ENCODE measurements at regions of chr3 and their contacts with region 1.

Region 1: DNA sequence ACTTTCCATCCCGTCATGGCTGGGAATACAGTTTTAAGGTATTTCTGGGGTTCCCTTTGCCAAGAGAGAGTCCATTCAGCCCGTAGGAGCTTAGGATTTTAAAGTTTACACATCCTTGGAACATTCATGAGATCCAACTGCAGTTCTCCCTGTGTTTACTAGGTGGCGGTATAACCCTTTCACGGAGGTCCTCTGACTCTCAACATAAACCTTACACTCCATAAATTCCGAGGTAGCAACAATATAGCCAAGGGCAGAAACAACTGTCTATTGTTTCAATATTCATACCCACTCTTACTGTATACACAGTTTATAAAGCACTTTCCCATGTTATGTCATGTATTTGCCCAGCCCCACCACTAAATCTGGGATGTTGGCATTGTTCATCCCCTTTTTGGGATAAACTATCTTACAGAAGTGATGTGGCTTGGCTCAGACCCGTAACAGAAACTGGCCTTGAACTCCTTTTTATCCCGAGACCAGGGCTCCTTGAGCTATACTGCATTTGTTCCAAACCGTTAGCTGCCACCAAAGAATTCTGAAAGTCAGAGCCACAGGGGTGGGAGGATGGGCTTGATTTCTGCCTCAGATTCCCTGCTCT is 69.2 kb upstream of the COL6A5 start:
- DNase-seq: peak; percentile 23
- ATAC-seq: peak; percentile 94
- H3K4me3 ChIP-seq: no peak overlapping the region
- H3K27ac ChIP-seq: no peak overlapping the region
- H3K4me1 ChIP-seq: no peaks in the 10 kb centered on the region
- H3K27me3 ChIP-seq: peaks cover 39% of the 10 kb centered on the region
- CTCF ChIP-seq: peak; percentile 56 to 95 (median 87); a peak in 5 of 6 replicates
- POLR2A ChIP-seq: no peak
- RAD21 ChIP-seq: peak; percentile 83

Region 2: GRCh38 chr3:129439817-129440617 is 836.3 kb before region 1 on chr3 and contains the starts of genes IFT122 and MBD4:
- CTCF ChIA-PET with region 1: no interaction called
- POLR2A ChIA-PET with region 1: no interaction called
- RAD21 ChIA-PET with region 1: no interaction called
- intact Hi-C with region 1: no loop called
- DNase-seq: peak; percentile 98
- ATAC-seq: peak; percentile 93
- H3K4me3 ChIP-seq: peak within 1 kb of the TSS; percentile 90 to 99
- H3K27ac ChIP-seq: peak within 1 kb of the TSS; percentile 85
- H3K4me1 ChIP-seq: peaks cover 9 to 18% of the 10 kb centered on the region in 2 experiments; a peak in 3 of 4 replicates
- H3K27me3 ChIP-seq: no peaks in the 10 kb centered on the region
- CTCF ChIP-seq: no peak
- POLR2A ChIP-seq: peak; percentile 62
- RAD21 ChIP-seq: no peak
- total RNA-seq, gene IFT122: 21.4 TPM
- total RNA-seq, gene MBD4: 15.7 TPM

Region 3: GRCh38 chr3:130236417-130236816 is 39.9 kb before region 1 on chr3:
- CTCF ChIA-PET with region 1: no interaction called
- POLR2A ChIA-PET with region 1: no interaction called
- RAD21 ChIA-PET with region 1: no interaction called
- intact Hi-C with region 1: no loop called
- DNase-seq: no peak
- ATAC-seq: no peak
- H3K4me3 ChIP-seq: no peak overlapping the region
- H3K27ac ChIP-seq: no peak overlapping the region
- H3K4me1 ChIP-seq: no peaks in the 10 kb centered on the region
- H3K27me3 ChIP-seq: peaks cover 42% of the 10 kb centered on the region
- CTCF ChIP-seq: no peak
- POLR2A ChIP-seq: no peak
- RAD21 ChIP-seq: no peak

Region 4: DNA sequence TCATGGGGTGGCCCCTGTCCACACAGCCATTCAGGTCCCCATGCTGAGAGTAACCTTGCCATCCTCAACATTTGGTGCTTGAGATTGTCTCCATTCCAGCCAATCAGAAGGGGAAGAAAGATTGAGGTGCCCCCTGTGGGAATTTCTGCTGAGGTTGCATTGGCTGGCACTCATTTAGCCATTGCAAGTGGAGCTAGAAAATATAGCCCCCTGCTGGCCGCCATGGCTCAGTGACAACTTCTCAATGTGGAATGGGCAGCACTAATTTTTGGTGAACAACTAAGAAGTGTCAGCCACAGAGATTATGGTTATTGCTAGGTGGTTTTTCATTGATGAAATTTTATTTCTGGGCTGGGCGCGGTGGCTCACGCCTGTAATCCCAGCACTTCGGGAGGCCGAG is 262.7 kb after region 1 on chr3:
- CTCF ChIA-PET with region 1: interaction called, 19 read pairs
- POLR2A ChIA-PET with region 1: no interaction called
- RAD21 ChIA-PET with region 1: no interaction called
- intact Hi-C with region 1: loop called (anchors 1 kb)
- DNase-seq: peak; percentile 40
- ATAC-seq: peak; percentile 94
- H3K4me3 ChIP-seq: no peak overlapping the region
- H3K27ac ChIP-seq: no peak overlapping the region
- H3K4me1 ChIP-seq: no peaks in the 10 kb centered on the region
- H3K27me3 ChIP-seq: peaks cover 32% of the 10 kb centered on the region
- CTCF ChIP-seq: peak; percentile 76 to 80 (median 78)
- POLR2A ChIP-seq: no peak
- RAD21 ChIP-seq: peak; percentile 71

Region 5: GRCh38 chr3:130688015-130688688 is 411.8 kb after region 1 on chr3:
- CTCF ChIA-PET with region 1: no interaction called
- POLR2A ChIA-PET with region 1: no interaction called
- RAD21 ChIA-PET with region 1: no interaction called
- intact Hi-C with region 1: loop called (anchors 10 kb)
- DNase-seq: no peak
- ATAC-seq: no peak
- H3K4me3 ChIP-seq: no peak overlapping the region
- H3K27ac ChIP-seq: no peak overlapping the region
- H3K4me1 ChIP-seq: peaks cover 0 to 9% of the 10 kb centered on the region in 2 experiments; a peak in 2 of 4 replicates
- H3K27me3 ChIP-seq: no peaks in the 10 kb centered on the region
- CTCF ChIP-seq: no peak
- POLR2A ChIP-seq: no peak
- RAD21 ChIP-seq: no peak

Region 6: GRCh38 chr3:130850044-130850797 is 573.9 kb after region 1 on chr3:
- CTCF ChIA-PET with region 1: no interaction called
- POLR2A ChIA-PET with region 1: no interaction called
- RAD21 ChIA-PET with region 1: no interaction called
- intact Hi-C with region 1: no loop called
- DNase-seq: no peak
- ATAC-seq: no peak
- H3K4me3 ChIP-seq: no peak overlapping the region
- H3K27ac ChIP-seq: no peak overlapping the region
- H3K4me1 ChIP-seq: no peaks in the 10 kb centered on the region
- H3K27me3 ChIP-seq: peaks cover 25% of the 10 kb centered on the region
- CTCF ChIP-seq: no peak
- POLR2A ChIP-seq: no peak
- RAD21 ChIP-seq: no peak

Measured in HCT116 (cell line).